ENCODE measurements at regions of chr22 and their contacts with region 1.

Region 1: GRCh38 chr22:45934659-45935341 is 42.2 kb downstream of the WNT7B start:
- DNase-seq: peak; percentile 84 to 97
- H3K4me3 ChIP-seq: peak overlapping the region; percentile 47; the same call in 1 of the 2 replicates
- H3K27ac ChIP-seq: peak overlapping the region; percentile 78
- H3K4me1 ChIP-seq: peaks cover 37% of the 10 kb centered on the region
- H3K27me3 ChIP-seq: no peaks in the 10 kb centered on the region
- CTCF ChIP-seq: no peak

Region 2: GRCh38 chr22:45960477-45961386 is 25.9 kb after region 1 on chr22:
- CTCF ChIA-PET with region 1: no interaction called
- POLR2A ChIA-PET with region 1: no interaction called
- intact Hi-C with region 1: loop called (anchors 2 kb)
- DNase-seq: peak; percentile 40 to 68
- H3K4me3 ChIP-seq: no peak overlapping the region
- H3K27ac ChIP-seq: no peak overlapping the region
- H3K4me1 ChIP-seq: peaks cover 26% of the 10 kb centered on the region; the same call in 1 of the 2 replicates
- H3K27me3 ChIP-seq: no peaks in the 10 kb centered on the region
- CTCF ChIP-seq: no peak

Region 3: DNA sequence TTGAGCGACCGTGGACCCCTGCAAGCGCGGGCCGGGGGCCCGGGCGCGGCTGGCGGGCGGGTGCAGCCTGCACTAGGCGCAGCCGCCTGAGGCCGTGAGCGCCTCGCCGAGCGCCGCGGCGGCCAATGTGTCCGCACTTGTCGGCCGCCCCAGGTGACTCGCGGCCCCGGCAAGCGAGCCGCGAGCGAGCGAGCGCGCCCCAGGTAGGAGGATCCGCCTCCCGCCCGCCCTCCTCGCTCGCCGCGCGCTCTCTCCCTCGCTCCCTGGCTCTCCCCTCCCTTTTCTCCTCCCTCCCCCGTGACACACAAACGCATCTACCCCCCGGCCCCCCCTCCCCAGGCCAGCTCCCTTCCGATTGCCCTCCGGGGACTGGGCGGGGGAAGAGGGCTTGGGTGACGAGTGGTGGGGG is 42.2 kb after region 1 on chr22 and contains the start of gene WNT7B:
- CTCF ChIA-PET with region 1: interaction called, 14 read pairs
- POLR2A ChIA-PET with region 1: no interaction called
- intact Hi-C with region 1: no loop called
- DNase-seq: peak; percentile 79 to 86
- H3K4me3 ChIP-seq: peak within 1 kb of the TSS; percentile 99
- H3K27ac ChIP-seq: no peak within 1 kb of the TSS
- H3K4me1 ChIP-seq: peaks cover 36% of the 10 kb centered on the region
- H3K27me3 ChIP-seq: no peaks in the 10 kb centered on the region
- CTCF ChIP-seq: no peak
- total RNA-seq, gene WNT7B: 66.9 and 75.5 TPM in 2 replicates

Measured in PC-9 (cell line).